A673 (cell line): ENCODE measurements at regions of chr10 and their contacts with region 1.

Region 1: DNA sequence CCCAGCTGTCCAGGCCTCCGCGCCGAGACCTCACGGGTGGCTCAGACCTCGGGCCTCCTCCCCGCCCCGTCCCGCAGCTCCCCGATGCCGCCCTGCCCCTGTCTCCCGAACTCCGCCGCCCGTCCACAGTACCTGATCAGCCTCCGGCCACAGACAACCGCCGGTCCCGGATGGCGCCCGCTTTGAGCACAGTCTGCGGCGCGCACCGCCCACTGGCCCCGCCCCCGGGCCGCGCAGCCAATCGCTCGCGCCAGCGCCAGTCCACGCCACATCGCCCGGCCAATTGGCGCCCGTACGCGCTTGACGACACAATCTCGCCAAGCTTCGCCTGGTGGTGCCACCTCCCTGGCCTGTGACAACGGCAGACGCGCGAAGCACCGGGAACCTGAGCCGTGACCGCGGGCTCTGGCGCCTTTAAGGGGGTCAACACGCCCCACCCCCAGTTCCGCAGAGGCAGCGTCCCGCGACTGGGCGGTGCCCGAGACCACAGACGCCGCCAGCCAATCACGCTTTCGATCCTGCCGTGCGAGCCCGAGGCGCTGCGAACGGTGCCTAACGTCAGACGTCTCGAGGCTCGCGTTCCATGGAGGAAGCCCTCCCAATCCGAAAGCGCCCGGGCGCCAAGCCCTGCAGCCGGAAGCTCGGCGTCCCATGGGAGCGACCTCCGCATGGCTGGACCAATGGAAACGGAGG is at the start of gene IDI1:
- DNase-seq: peak; percentile 99
- H3K4me3 ChIP-seq: peak within 1 kb of the TSS; percentile 97
- H3K27ac ChIP-seq: peak within 1 kb of the TSS; percentile 99
- H3K4me1 ChIP-seq: peaks cover 28% of the 10 kb centered on the region
- H3K27me3 ChIP-seq: no peaks in the 10 kb centered on the region
- CTCF ChIP-seq: no peak
- total RNA-seq, gene IDI1: 84.6 and 111 TPM in 2 replicates

Region 2: DNA sequence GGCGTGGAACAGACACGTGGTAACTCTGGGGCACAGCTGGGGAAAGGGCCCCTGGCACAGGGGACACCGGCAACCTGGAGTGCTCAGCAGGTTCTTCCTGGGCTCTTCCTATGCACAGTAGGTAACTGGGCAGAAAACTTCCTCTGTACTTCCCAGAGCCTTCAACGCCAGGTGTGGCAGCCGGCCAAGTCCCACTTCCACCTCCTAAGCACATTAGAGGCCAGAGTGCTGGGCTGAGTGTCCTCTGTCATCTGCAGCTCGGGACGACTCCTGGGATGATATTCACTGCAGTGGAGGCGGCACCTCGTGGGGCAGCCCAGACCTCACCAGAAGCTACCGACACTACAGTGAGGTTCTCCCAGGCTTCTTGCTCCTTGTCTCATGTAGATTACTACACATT is 231.9 kb before region 1 on chr10:
- CTCF ChIA-PET with region 1: no interaction called
- POLR2A ChIA-PET with region 1: interaction called, 10 read pairs
- intact Hi-C with region 1: no loop called
- DNase-seq: no peak
- H3K4me3 ChIP-seq: no peak overlapping the region
- H3K27ac ChIP-seq: no peak overlapping the region
- H3K4me1 ChIP-seq: no peaks in the 10 kb centered on the region
- H3K27me3 ChIP-seq: no peaks in the 10 kb centered on the region
- CTCF ChIP-seq: no peak

Region 3: DNA sequence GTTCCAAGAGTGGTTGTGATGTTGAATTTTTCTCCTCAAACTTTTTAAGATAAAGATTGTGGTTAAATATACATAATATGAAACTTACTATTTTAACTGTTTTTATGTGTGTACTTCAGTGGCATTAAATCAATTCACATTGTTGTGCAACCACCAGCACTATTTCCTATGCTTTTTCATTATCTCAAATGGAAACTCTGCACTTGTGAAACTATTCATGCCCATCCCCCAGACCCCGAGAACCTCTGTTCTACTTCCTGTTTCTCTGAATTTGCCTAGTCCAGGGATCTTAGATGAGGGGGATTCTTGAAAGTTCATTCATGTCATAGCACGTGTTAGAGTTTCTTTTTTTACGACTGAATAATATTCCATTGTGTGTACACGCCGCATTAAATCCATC is 74.3 kb after region 1 on chr10:
- CTCF ChIA-PET with region 1: no interaction called
- POLR2A ChIA-PET with region 1: no interaction called
- intact Hi-C with region 1: no loop called
- DNase-seq: peak; percentile 16
- H3K4me3 ChIP-seq: no peak overlapping the region
- H3K27ac ChIP-seq: no peak overlapping the region
- H3K4me1 ChIP-seq: peaks cover 15% of the 10 kb centered on the region
- H3K27me3 ChIP-seq: no peaks in the 10 kb centered on the region
- CTCF ChIP-seq: no peak

Region 4: DNA sequence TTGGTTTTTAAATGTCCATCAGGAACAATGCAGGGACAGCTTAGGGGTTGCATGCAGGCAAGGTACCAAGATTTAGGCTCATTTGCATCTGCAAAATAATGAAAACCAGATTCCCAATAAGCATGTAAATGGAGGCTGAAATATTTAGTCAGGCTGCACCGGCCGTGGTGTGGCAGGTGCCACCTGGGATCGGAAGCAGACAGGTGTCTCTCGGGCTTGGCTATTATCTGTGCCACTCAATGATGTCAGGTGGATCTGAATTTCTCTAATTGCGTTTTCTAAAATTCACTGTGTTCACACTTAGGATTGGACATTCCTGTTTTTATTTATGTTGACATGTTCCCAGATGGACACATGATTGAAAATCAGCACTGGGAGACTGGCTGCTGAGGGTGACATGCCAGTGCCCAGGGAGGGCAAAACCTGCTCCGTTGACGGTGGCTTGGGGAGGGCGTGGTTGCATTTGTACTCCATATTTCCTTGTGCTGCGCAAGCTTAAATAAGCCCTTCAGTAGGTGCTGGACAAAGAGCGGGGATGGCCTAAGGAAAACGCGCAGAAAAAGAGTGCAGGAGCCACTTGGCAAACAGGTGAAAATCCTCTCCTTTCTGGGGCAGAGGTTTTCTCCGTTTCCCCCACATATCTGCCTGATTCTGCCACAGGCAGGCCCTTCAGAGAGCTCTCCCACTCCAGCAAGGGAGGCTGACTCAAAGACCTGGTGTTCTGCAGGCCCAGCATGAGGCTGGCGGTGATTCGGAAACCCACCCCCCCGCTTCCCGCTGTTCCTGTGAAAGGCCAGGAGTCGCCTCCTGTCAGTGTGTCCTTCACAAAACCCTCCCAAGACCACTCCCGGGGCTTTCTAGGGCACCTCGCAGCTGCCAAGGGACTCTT is 149.8 kb after region 1 on chr10:
- CTCF ChIA-PET with region 1: no interaction called
- POLR2A ChIA-PET with region 1: no interaction called
- intact Hi-C with region 1: no loop called
- DNase-seq: no peak
- H3K4me3 ChIP-seq: no peak overlapping the region
- H3K27ac ChIP-seq: no peak overlapping the region
- H3K4me1 ChIP-seq: no peaks in the 10 kb centered on the region
- H3K27me3 ChIP-seq: peaks cover 96% of the 10 kb centered on the region
- CTCF ChIP-seq: no peak